ENCODE measurements at regions of chr16 and their contacts with region 1.

Region 1: GRCh38 chr16:50245417-50246298 is 20.7 kb upstream of the ADCY7 start:
- DNase-seq: peak; percentile 35
- H3K4me3 ChIP-seq: peak overlapping the region; percentile 56 to 64
- H3K27ac ChIP-seq: no peak overlapping the region
- H3K4me1 ChIP-seq: peaks cover 21% of the 10 kb centered on the region
- H3K27me3 ChIP-seq: no peaks in the 10 kb centered on the region
- CTCF ChIP-seq: peak in 1 of 3 experiments; percentile 14
- POLR2A ChIP-seq: no peak

Region 2: DNA sequence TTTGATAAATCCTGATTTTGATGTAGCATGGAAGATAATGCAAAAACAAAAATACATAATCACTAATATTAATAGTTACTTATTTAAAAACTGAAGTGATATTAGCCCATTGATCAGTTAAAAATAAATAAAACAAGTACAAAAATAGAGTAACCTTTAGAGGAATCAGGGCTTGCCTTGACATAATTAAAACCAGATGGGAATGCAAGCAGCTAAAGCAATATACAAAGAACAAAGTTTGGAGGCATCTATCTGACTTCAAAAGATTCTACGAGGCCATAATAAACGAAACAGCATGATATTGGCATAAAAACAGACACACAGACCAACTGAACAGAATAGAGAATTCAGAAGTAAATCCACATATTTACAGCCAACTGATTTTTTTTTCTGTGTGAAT is 194.9 kb before region 1 on chr16:
- intact Hi-C with region 1: no loop called
- DNase-seq: no peak
- H3K4me3 ChIP-seq: no peak overlapping the region
- H3K27ac ChIP-seq: no peak overlapping the region
- H3K4me1 ChIP-seq: no peaks in the 10 kb centered on the region
- H3K27me3 ChIP-seq: no peaks in the 10 kb centered on the region
- CTCF ChIP-seq: no peak
- POLR2A ChIP-seq: no peak

Region 3: GRCh38 chr16:50368410-50369132 is 122.9 kb after region 1 on chr16 and contains the start of gene BRD7:
- intact Hi-C with region 1: loop called (anchors 10 kb)
- DNase-seq: peak; percentile 67
- H3K4me3 ChIP-seq: peak within 1 kb of the TSS; percentile 85 to 94
- H3K27ac ChIP-seq: peak within 1 kb of the TSS; percentile 42 to 82
- H3K4me1 ChIP-seq: peaks cover 15% of the 10 kb centered on the region
- H3K27me3 ChIP-seq: no peaks in the 10 kb centered on the region
- CTCF ChIP-seq: peak in 1 of 3 experiments; percentile 88
- POLR2A ChIP-seq: no peak
- total RNA-seq, gene BRD7: 79.2 to 96.0 TPM

Region 4: GRCh38 chr16:51231702-51232101 is 986.0 kb after region 1 on chr16:
- intact Hi-C with region 1: no loop called
- DNase-seq: no peak
- H3K4me3 ChIP-seq: no peak overlapping the region
- H3K27ac ChIP-seq: no peak overlapping the region
- H3K4me1 ChIP-seq: no peaks in the 10 kb centered on the region
- H3K27me3 ChIP-seq: no peaks in the 10 kb centered on the region
- CTCF ChIP-seq: no peak
- POLR2A ChIP-seq: no peak

Measured in testis (tissue), 5 donors.